CD4-positive, alpha-beta memory T cell (primary cell): ENCODE measurements at regions of chr10 and their contacts with region 1.

Region 1: GRCh38 chr10:13227031-13227430 is 7.1 kb downstream of the UCMA start:
- DNase-seq: no peak
- H3K4me3 ChIP-seq: no peak overlapping the region
- H3K4me3 Mint-ChIP-seq: no peak overlapping the region
- H3K27ac ChIP-seq: no peak overlapping the region
- H3K27ac Mint-ChIP-seq: no peak overlapping the region
- H3K4me1 ChIP-seq: no peaks in the 10 kb centered on the region
- H3K4me1 Mint-ChIP-seq: no peaks in the 10 kb centered on the region
- H3K27me3 ChIP-seq: no peaks in the 10 kb centered on the region
- H3K27me3 Mint-ChIP-seq: no peaks in the 10 kb centered on the region

Region 2: GRCh38 chr10:13276749-13277365 is 49.8 kb after region 1 on chr10:
- CTCF ChIA-PET with region 1: no interaction called
- POLR2A ChIA-PET with region 1: no interaction called
- intact Hi-C with region 1: loop called (anchors 5 kb)
- DNase-seq: no peak
- H3K4me3 ChIP-seq: no peak overlapping the region
- H3K4me3 Mint-ChIP-seq: no peak overlapping the region
- H3K27ac ChIP-seq: no peak overlapping the region
- H3K27ac Mint-ChIP-seq: peak overlapping the region in 1 of 7 donors; percentile 15
- H3K4me1 ChIP-seq: no peaks in the 10 kb centered on the region
- H3K4me1 Mint-ChIP-seq: peaks cover 0 to under 1% (median 0%) of the 10 kb centered on the region in 4 donors
- H3K27me3 ChIP-seq: no peaks in the 10 kb centered on the region
- H3K27me3 Mint-ChIP-seq: peaks cover 0 to 2% of the 10 kb centered on the region in 2 donors